ENCODE measurements at regions of chr17 and their contacts with region 1.

Region 1: GRCh38 chr17:49585422-49586027 is 9.9 kb downstream of the NXPH3 start:
- DNase-seq: no peak
- H3K4me3 ChIP-seq: no peak overlapping the region
- H3K27ac ChIP-seq: no peak overlapping the region
- H3K4me1 ChIP-seq: peaks cover 0 to 5% (median 2%) of the 10 kb centered on the region in 4 experiments; a peak in 3 of 7 replicates
- H3K27me3 ChIP-seq: no peaks in the 10 kb centered on the region; a peak in 1 of 7 replicates
- CTCF ChIP-seq: peak; percentile 66 to 80 (median 79)
- EP300 ChIP-seq: no peak
- POLR2A ChIP-seq: no peak
- RAD21 ChIP-seq: peak; percentile 25 to 39; a peak in 3 of 4 replicates

Region 2: GRCh38 chr17:49597928-49598655 is 12.6 kb after region 1 on chr17:
- CTCF ChIA-PET with region 1: interaction called, 17 read pairs
- POLR2A ChIA-PET with region 1: interaction called, 6 read pairs
- DNase-seq: no peak
- H3K4me3 ChIP-seq: no peak overlapping the region
- H3K27ac ChIP-seq: no peak overlapping the region
- H3K4me1 ChIP-seq: no peaks in the 10 kb centered on the region
- H3K27me3 ChIP-seq: no peaks in the 10 kb centered on the region
- CTCF ChIP-seq: no peak
- EP300 ChIP-seq: no peak
- POLR2A ChIP-seq: no peak
- RAD21 ChIP-seq: no peak

Region 3: GRCh38 chr17:49603720-49604119 is 18.2 kb after region 1 on chr17:
- CTCF ChIA-PET with region 1: interaction called, 17 read pairs
- POLR2A ChIA-PET with region 1: no interaction called
- DNase-seq: no peak
- H3K4me3 ChIP-seq: no peak overlapping the region
- H3K27ac ChIP-seq: no peak overlapping the region
- H3K4me1 ChIP-seq: no peaks in the 10 kb centered on the region
- H3K27me3 ChIP-seq: no peaks in the 10 kb centered on the region
- CTCF ChIP-seq: no peak
- EP300 ChIP-seq: no peak
- POLR2A ChIP-seq: no peak
- RAD21 ChIP-seq: no peak

Region 4: DNA sequence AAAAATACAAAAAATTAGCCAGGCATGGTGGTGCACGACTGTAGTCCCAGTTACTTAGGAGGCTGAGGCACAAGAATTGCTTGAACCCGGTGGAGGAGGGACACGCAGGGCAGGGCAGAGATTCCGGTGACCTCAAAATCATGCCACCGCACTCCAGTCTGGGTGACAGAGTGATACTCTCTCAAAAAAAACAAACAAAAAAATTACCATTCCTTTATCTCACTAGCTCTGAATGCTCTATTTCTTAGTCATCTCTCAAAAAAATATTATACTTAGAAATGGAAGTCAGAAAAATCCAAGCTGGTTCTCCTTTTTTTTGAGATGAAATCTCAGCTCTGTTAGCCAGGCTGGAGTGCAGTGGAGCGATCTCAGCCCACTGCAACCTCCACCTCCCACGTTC is 51.5 kb after region 1 on chr17:
- CTCF ChIA-PET with region 1: no interaction called
- POLR2A ChIA-PET with region 1: no interaction called
- DNase-seq: no peak
- H3K4me3 ChIP-seq: no peak overlapping the region
- H3K27ac ChIP-seq: no peak overlapping the region
- H3K4me1 ChIP-seq: peaks cover 0 to 5% (median 3%) of the 10 kb centered on the region in 4 experiments; a peak in 3 of 7 replicates
- H3K27me3 ChIP-seq: no peaks in the 10 kb centered on the region
- CTCF ChIP-seq: no peak
- EP300 ChIP-seq: no peak
- POLR2A ChIP-seq: no peak
- RAD21 ChIP-seq: no peak